ENCODE measurements at regions of chr5 and their contacts with region 1.

Region 1: GRCh38 chr5:150544611-150545219 is 36.8 kb downstream of the NDST1 start:
- DNase-seq: peak; percentile 84
- H3K4me3 ChIP-seq: no peak overlapping the region
- H3K27ac ChIP-seq: peak overlapping the region in 1 of 4 donors; percentile 85
- H3K4me1 ChIP-seq: peaks cover 9 to 41% (median 19%) of the 10 kb centered on the region in 4 donors
- H3K27me3 ChIP-seq: no peaks in the 10 kb centered on the region
- CTCF ChIP-seq: peak; percentile 75 to 84 (median 81)
- EP300 ChIP-seq: no peak
- POLR2A ChIP-seq: no peak

Region 2: GRCh38 chr5:150458819-150459557 is 85.7 kb before region 1 on chr5:
- in situ Hi-C with region 1: loop called (anchors 10 kb)
- intact Hi-C with region 1: loop called (anchors 5 kb)
- DNase-seq: peak; percentile 89
- H3K4me3 ChIP-seq: peak overlapping the region in 1 of 4 donors; percentile 18
- H3K27ac ChIP-seq: peak overlapping the region in 1 of 4 donors; percentile 23
- H3K4me1 ChIP-seq: peaks cover 0 to 17% (median 7%) of the 10 kb centered on the region in 4 donors
- H3K27me3 ChIP-seq: no peaks in the 10 kb centered on the region
- CTCF ChIP-seq: peak; percentile 79 to 92 (median 88)
- EP300 ChIP-seq: no peak
- POLR2A ChIP-seq: no peak

Region 3: DNA sequence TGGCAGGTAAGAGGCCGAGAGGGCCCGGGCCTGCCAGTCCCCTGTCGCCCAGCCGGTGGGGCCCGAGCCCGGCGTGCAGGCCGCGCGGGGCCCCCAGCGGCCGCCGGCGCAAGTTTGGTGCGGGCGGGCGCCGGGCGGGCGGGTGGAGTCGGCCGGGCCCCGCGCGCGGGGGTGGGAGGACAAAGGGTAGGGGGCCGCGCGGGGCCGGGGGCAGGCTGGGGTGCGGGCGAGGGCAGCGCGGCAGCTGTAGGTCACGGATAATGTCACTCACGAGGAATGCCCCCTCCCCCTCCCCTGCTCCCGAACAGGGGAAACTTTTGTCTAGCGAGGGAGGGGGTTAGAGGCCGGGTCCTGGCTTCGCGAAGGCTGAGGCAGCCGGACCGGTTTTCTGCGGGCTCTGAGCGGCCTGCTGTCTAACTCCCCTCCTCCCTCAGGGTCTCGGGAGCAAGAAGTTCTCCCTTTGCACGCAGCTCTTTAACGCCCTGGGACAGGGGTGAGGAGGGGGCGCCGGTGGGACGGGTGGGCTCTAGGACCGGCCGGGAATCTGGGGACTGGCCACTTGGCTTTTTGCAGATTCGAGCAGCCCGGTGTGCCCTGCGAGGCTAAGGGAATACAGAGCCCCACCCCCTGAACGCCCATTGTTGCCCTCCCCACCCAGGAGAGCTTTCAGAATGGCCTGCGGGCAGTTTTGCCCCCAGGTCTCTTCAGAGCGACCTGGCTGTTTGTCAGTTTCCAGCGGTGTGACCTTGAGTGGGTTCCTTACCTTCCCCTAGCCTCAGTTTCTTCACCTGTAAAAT is 58.1 kb before region 1 on chr5:
- in situ Hi-C with region 1: no loop called
- intact Hi-C with region 1: loop called (anchors 10 kb)
- DNase-seq: peak; percentile 57
- H3K4me3 ChIP-seq: peak overlapping the region; percentile 62 to 94 (median 90)
- H3K27ac ChIP-seq: peak overlapping the region; percentile 90 to 95 (median 94)
- H3K4me1 ChIP-seq: peaks cover 38 to 56% (median 48%) of the 10 kb centered on the region in 4 donors
- H3K27me3 ChIP-seq: no peaks in the 10 kb centered on the region
- CTCF ChIP-seq: peak in 1 of 5 experiments; percentile 4
- EP300 ChIP-seq: no peak
- POLR2A ChIP-seq: no peak

Measured in transverse colon (tissue), 4 donors.